PC-9 (cell line): ENCODE measurements at regions of chr11 and their contacts with region 1.

Region 1: GRCh38 chr11:103108933-103109817 is at the start of gene DYNC2H1:
- DNase-seq: peak; percentile 86 to 88
- H3K4me3 ChIP-seq: peak within 1 kb of the TSS; percentile 79
- H3K27ac ChIP-seq: 0 out of 2 replicates have a peak within 1 kb of the TSS, but pooled peaks have one; percentile 6
- H3K4me1 ChIP-seq: no peaks in the 10 kb centered on the region; the same call in none of the 2 replicates
- H3K27me3 ChIP-seq: no peaks in the 10 kb centered on the region
- CTCF ChIP-seq: peak; percentile 68
- total RNA-seq, gene DYNC2H1: 11.2 and 12.2 TPM in 2 replicates

Region 2: DNA sequence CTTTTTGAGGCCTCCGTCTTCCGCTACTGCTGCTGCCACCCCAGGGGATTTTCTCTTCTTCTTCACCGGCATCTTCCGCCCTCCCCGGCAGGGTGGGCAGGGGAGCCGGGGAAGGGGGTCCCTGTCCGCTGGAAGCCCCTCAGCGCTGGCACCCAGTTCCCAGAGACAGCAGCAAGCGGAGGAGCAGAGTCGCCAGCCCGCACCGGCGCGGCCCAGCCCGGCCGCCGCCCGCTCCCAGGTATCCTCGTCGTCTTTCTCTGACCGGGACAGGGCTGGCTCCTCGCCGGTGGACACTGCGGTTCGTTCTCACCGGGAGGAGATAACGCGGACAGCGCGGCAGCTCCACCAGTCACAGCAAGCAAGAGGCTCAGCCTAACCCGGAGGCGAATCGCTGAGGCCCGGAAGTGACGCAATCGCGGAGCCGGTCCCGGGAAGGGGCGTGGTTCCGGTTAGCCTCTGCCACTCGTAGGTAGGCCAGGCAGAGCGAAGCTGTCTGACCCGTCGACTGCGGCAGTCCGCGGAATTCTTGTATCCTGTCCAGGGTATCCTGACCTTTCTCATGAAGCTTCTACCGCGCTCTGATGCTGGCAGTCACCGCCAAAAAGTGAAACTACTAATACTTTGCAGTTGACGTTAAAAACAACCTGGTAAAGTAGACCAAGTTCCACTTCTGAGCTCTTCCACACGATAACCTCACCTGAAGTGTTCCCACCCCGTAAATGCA is 17.2 kb before region 1 on chr11 and contains the start of gene DCUN1D5:
- CTCF ChIA-PET with region 1: interaction called, 7 read pairs
- POLR2A ChIA-PET with region 1: interaction called, 18 read pairs
- intact Hi-C with region 1: loop called (anchors 2 kb)
- DNase-seq: peak; percentile 97
- H3K4me3 ChIP-seq: peak within 1 kb of the TSS; percentile 74
- H3K27ac ChIP-seq: peak within 1 kb of the TSS; percentile 84
- H3K4me1 ChIP-seq: peaks cover 38% of the 10 kb centered on the region
- H3K27me3 ChIP-seq: no peaks in the 10 kb centered on the region
- CTCF ChIP-seq: no peak
- total RNA-seq, gene DCUN1D5: 42.7 and 53.4 TPM in 2 replicates

Region 3: DNA sequence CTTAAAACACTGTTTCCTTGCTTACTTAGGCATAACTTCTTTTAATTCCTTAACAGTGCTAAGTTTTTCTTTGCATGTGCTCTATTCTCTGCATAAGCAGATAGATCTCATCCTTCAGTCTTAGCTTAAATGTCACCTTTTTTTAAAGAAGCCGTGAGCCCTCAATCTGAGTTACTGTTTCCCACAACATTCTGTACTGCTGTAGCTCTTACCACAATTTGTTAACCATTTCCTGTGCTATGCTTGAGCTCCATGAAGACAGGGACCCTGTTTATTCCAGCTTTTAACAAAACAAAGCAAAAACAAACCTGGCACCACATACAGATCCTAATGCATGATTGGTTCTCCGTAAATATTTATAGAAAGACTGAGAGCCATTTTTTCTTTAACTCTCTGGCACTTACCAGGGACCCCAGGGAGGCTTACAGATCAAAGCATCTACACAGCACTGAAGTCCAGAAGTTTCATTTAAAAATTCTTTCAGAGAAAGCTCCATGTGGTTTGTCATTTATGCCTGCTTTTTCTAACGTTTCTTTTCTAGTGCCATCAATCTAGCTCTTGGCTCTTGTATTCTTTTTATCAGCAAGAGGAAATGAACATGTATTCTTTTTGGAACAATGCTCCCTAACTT is 74.9 kb after region 1 on chr11:
- CTCF ChIA-PET with region 1: no interaction called
- POLR2A ChIA-PET with region 1: no interaction called
- intact Hi-C with region 1: no loop called
- DNase-seq: peak in 1 of 2 experiments; percentile 11
- H3K4me3 ChIP-seq: no peak overlapping the region
- H3K27ac ChIP-seq: no peak overlapping the region
- H3K4me1 ChIP-seq: no peaks in the 10 kb centered on the region
- H3K27me3 ChIP-seq: no peaks in the 10 kb centered on the region
- CTCF ChIP-seq: no peak

Region 4: DNA sequence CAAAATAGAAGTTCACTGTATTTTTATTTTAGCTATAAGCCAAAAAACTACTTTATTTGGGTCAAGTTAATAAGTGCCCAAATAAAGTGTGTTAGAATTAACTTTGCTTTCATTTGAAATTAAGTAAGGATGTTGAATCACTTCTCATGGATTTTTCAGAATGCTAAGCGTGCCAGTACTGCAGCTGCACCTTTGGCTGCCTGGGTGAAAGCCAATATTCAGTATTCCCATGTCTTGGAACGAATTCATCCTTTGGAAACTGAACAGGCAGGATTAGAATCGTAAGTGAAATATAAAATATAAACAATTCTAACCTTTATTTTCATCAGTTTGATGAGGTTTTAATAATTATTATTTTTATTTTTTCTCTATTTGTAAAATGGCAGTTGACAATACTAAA is 113.6 kb after region 1 on chr11:
- CTCF ChIA-PET with region 1: no interaction called
- POLR2A ChIA-PET with region 1: no interaction called
- intact Hi-C with region 1: no loop called
- DNase-seq: no peak
- H3K4me3 ChIP-seq: no peak overlapping the region
- H3K27ac ChIP-seq: no peak overlapping the region
- H3K4me1 ChIP-seq: no peaks in the 10 kb centered on the region
- H3K27me3 ChIP-seq: no peaks in the 10 kb centered on the region
- CTCF ChIP-seq: no peak